ENCODE measurements at regions of chr2 and their contacts with region 1.

Region 1: GRCh38 chr2:220065581-220065980 is 438.2 kb downstream of the SLC4A3 start:
- DNase-seq: no peak
- ATAC-seq: no peak
- H3K4me3 ChIP-seq: no peak overlapping the region
- H3K27ac ChIP-seq: no peak overlapping the region
- H3K4me1 ChIP-seq: no peaks in the 10 kb centered on the region
- H3K27me3 ChIP-seq: no peaks in the 10 kb centered on the region
- CTCF ChIP-seq: no peak

Region 2: GRCh38 chr2:219857751-219858150 is 207.8 kb before region 1 on chr2:
- CTCF ChIA-PET with region 1: no interaction called
- POLR2A ChIA-PET with region 1: interaction called, 10 read pairs
- in situ Hi-C with region 1: no loop called
- intact Hi-C with region 1: no loop called
- DNase-seq: no peak
- ATAC-seq: no peak
- H3K4me3 ChIP-seq: no peak overlapping the region
- H3K27ac ChIP-seq: no peak overlapping the region
- H3K4me1 ChIP-seq: no peaks in the 10 kb centered on the region
- H3K27me3 ChIP-seq: peaks cover 3% of the 10 kb centered on the region
- CTCF ChIP-seq: no peak